CD8-positive, alpha-beta T cell (primary cell): ENCODE measurements at regions of chr17 and their contacts with region 1.

Region 1: DNA sequence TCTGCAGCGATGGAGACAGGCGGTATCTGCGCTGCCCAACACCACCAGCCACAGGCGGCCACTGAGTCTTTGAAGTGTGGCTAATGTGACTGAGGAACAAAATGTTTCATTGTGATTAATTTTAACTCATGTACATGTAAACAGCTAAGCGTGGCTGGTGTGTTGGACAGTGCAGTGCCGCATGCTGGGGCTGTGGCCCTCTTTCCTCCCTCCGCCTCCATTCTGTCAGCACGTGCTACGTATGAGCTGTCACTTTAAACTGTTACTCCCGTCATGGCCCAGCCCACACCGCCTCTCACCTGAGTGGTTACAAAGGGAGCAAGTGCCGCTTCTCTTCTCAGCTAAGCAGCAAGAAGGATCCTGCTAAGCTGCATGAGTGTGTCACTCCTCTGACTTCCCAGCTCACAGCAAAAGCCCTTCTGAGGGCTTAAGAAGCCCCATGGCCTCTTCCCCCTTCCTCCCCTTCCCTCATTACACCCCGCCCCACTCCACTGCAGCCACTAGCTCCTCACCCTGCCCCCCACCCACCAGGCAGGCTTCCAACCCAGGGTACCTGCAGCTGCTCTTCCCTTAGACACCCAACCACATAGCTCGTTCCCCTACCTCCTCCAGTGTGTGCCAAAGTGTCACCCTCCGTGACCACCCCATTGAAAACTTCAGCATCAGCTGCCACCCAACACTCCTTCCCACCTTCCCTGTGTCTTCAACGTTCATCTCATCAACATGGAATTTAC is 15.0 kb downstream of the HASPIN start:
- DNase-seq: peak in 8 of 9 experiments; percentile 42 to 83 (median 74)
- ATAC-seq: peak; percentile 87
- H3K4me3 ChIP-seq: no peak overlapping the region
- H3K4me3 Mint-ChIP-seq: peak overlapping the region; percentile 38
- H3K27ac ChIP-seq: peak overlapping the region in 1 of 2 experiments; percentile 2
- H3K27ac Mint-ChIP-seq: peak overlapping the region; percentile 88
- H3K4me1 ChIP-seq: peaks cover 36% of the 10 kb centered on the region
- H3K4me1 Mint-ChIP-seq: peaks cover 46% of the 10 kb centered on the region
- H3K27me3 ChIP-seq: no peaks in the 10 kb centered on the region
- H3K27me3 Mint-ChIP-seq: no peaks in the 10 kb centered on the region
- CTCF ChIP-seq: no peak

Region 2: GRCh38 chr17:3723556-3724369 is 15.0 kb before region 1 on chr17 and contains the start of gene HASPIN:
- CTCF ChIA-PET with region 1: interaction called, 15 read pairs
- POLR2A ChIA-PET with region 1: interaction called, 4 read pairs
- intact Hi-C with region 1: no loop called
- DNase-seq: peak; percentile 80 to 96 (median 90)
- ATAC-seq: peak; percentile 90
- H3K4me3 ChIP-seq: peak within 1 kb of the TSS; percentile 89 to 99
- H3K4me3 Mint-ChIP-seq: peak within 1 kb of the TSS; percentile 88
- H3K27ac ChIP-seq: peak within 1 kb of the TSS; percentile 63 to 72
- H3K27ac Mint-ChIP-seq: peak within 1 kb of the TSS; percentile 84
- H3K4me1 ChIP-seq: peaks cover 25% of the 10 kb centered on the region
- H3K4me1 Mint-ChIP-seq: peaks cover 35% of the 10 kb centered on the region
- H3K27me3 ChIP-seq: no peaks in the 10 kb centered on the region
- H3K27me3 Mint-ChIP-seq: no peaks in the 10 kb centered on the region
- CTCF ChIP-seq: no peak
- total RNA-seq, gene HASPIN: 0.38 to 0.58 TPM

Region 3: GRCh38 chr17:3770466-3770865 is 31.7 kb after region 1 on chr17:
- CTCF ChIA-PET with region 1: interaction called, 102 read pairs
- POLR2A ChIA-PET with region 1: interaction called, 3 read pairs
- intact Hi-C with region 1: loop called (anchors 1 kb)
- DNase-seq: peak; percentile 30 to 88 (median 73)
- ATAC-seq: peak; percentile 73
- H3K4me3 ChIP-seq: no peak overlapping the region
- H3K4me3 Mint-ChIP-seq: peak overlapping the region; percentile 68
- H3K27ac ChIP-seq: peak overlapping the region; percentile 57 to 61
- H3K27ac Mint-ChIP-seq: peak overlapping the region; percentile 95
- H3K4me1 ChIP-seq: peaks cover 66% of the 10 kb centered on the region
- H3K4me1 Mint-ChIP-seq: peaks cover 64% of the 10 kb centered on the region
- H3K27me3 ChIP-seq: no peaks in the 10 kb centered on the region
- H3K27me3 Mint-ChIP-seq: no peaks in the 10 kb centered on the region
- CTCF ChIP-seq: no peak

Region 4: GRCh38 chr17:3796110-3796821 is 57.5 kb after region 1 on chr17:
- CTCF ChIA-PET with region 1: interaction called, 22 read pairs
- POLR2A ChIA-PET with region 1: interaction called, 4 read pairs
- intact Hi-C with region 1: loop called (anchors 2 kb)
- DNase-seq: peak; percentile 74 to 96 (median 85)
- ATAC-seq: peak; percentile 67
- H3K4me3 ChIP-seq: no peak overlapping the region
- H3K4me3 Mint-ChIP-seq: peak overlapping the region; percentile 9
- H3K27ac ChIP-seq: peak overlapping the region; percentile 29 to 36
- H3K27ac Mint-ChIP-seq: peak overlapping the region; percentile 97
- H3K4me1 ChIP-seq: peaks cover 23% of the 10 kb centered on the region
- H3K4me1 Mint-ChIP-seq: peaks cover 52% of the 10 kb centered on the region
- H3K27me3 ChIP-seq: no peaks in the 10 kb centered on the region
- H3K27me3 Mint-ChIP-seq: no peaks in the 10 kb centered on the region
- CTCF ChIP-seq: no peak

Region 5: GRCh38 chr17:3827124-3827773 is 88.5 kb after region 1 on chr17:
- CTCF ChIA-PET with region 1: interaction called, 432 read pairs
- POLR2A ChIA-PET with region 1: interaction called, 35 read pairs
- intact Hi-C with region 1: loop called (anchors 1 kb)
- DNase-seq: peak; percentile 50 to 85 (median 79)
- ATAC-seq: peak; percentile 80
- H3K4me3 ChIP-seq: no peak overlapping the region
- H3K4me3 Mint-ChIP-seq: no peak overlapping the region
- H3K27ac ChIP-seq: no peak overlapping the region
- H3K27ac Mint-ChIP-seq: no peak overlapping the region
- H3K4me1 ChIP-seq: no peaks in the 10 kb centered on the region
- H3K4me1 Mint-ChIP-seq: peaks cover 2% of the 10 kb centered on the region
- H3K27me3 ChIP-seq: no peaks in the 10 kb centered on the region
- H3K27me3 Mint-ChIP-seq: no peaks in the 10 kb centered on the region
- CTCF ChIP-seq: peak; percentile 96

Region 6: GRCh38 chr17:4004517-4005295 is 266.0 kb after region 1 on chr17:
- CTCF ChIA-PET with region 1: interaction called, 7 read pairs
- POLR2A ChIA-PET with region 1: no interaction called
- intact Hi-C with region 1: loop called (anchors 2 to 10 kb)
- DNase-seq: peak; percentile 16 to 79 (median 58)
- ATAC-seq: peak; percentile 94
- H3K4me3 ChIP-seq: no peak overlapping the region
- H3K4me3 Mint-ChIP-seq: no peak overlapping the region
- H3K27ac ChIP-seq: no peak overlapping the region
- H3K27ac Mint-ChIP-seq: no peak overlapping the region
- H3K4me1 ChIP-seq: peaks cover 4% of the 10 kb centered on the region
- H3K4me1 Mint-ChIP-seq: peaks cover 4% of the 10 kb centered on the region
- H3K27me3 ChIP-seq: no peaks in the 10 kb centered on the region
- H3K27me3 Mint-ChIP-seq: no peaks in the 10 kb centered on the region
- CTCF ChIP-seq: peak; percentile 98

Region 7: DNA sequence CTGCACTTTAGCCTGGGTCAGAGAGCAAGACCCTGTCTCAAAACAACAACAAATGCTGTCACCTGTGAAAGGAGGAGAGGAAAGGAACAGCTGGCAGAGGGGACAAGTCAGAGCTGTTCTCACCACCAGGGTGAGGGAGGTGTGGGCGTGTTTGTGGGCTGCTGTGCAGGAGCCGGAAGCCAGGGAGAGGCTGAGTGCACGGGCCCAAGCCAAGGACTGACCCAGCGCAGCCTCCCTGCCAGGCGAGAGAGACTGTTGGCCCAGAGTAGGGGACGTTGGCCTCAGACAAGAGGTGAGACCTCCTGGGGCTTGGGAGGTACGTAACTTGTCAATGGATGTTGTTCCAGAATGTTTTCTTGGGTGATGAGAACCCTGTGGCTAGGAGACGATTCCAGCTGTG is 770.7 kb after region 1 on chr17:
- CTCF ChIA-PET with region 1: no interaction called
- POLR2A ChIA-PET with region 1: no interaction called
- intact Hi-C with region 1: no loop called
- DNase-seq: peak in 6 of 9 experiments; percentile 20 to 63 (median 38)
- ATAC-seq: peak; percentile 64
- H3K4me3 ChIP-seq: no peak overlapping the region
- H3K4me3 Mint-ChIP-seq: no peak overlapping the region
- H3K27ac ChIP-seq: no peak overlapping the region
- H3K27ac Mint-ChIP-seq: no peak overlapping the region
- H3K4me1 ChIP-seq: peaks cover 26% of the 10 kb centered on the region
- H3K4me1 Mint-ChIP-seq: peaks cover 31% of the 10 kb centered on the region
- H3K27me3 ChIP-seq: no peaks in the 10 kb centered on the region
- H3K27me3 Mint-ChIP-seq: no peaks in the 10 kb centered on the region
- CTCF ChIP-seq: no peak